ENCODE measurements at regions of chr17 and their contacts with region 1.

Region 1: DNA sequence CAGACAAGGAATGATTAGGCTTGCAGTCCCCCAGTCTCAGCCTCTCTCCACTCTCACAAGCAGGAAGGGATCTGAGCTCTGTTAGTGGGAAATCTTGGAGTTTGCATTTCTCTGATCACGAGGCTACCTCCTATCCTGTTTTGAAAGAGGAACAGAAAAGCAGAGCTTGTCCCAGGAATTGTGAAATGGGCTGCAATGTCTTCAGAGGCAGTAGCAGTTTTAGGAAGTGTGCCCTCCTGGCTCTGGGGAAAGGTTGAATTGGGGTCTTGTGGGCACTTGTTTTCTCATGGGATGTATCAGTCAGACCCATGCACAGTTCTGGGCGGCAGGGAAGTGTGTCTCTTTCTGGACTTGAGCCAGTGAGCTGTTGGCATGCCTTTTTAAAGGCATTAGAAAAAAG is 22.8 kb downstream of the NUP85 start:
- DNase-seq: no peak
- H3K4me3 ChIP-seq: no peak overlapping the region
- CTCF ChIP-seq: no peak

Region 2: DNA sequence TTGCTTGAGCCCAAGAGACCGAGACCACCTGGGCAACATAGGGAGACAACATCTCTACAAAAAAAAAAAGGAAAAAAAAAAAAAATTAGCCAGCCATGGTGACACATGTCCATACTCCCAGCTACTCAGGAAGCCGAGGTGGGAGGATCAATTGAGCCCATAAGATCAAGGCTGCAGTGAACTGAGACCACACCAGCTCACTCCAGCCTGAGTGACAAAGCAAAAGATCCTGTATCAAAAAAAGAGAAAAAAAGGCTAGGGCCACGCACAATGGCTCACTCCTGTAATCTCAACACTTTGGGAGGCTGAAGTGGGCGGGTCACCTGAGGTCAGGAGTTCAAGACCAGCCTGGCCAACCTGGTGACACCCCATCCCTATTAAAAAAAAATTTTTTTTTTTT is 59.3 kb before region 1 on chr17:
- CTCF ChIA-PET with region 1: no interaction called
- POLR2A ChIA-PET with region 1: no interaction called
- DNase-seq: no peak
- H3K4me3 ChIP-seq: no peak overlapping the region
- CTCF ChIP-seq: no peak

Region 3: DNA sequence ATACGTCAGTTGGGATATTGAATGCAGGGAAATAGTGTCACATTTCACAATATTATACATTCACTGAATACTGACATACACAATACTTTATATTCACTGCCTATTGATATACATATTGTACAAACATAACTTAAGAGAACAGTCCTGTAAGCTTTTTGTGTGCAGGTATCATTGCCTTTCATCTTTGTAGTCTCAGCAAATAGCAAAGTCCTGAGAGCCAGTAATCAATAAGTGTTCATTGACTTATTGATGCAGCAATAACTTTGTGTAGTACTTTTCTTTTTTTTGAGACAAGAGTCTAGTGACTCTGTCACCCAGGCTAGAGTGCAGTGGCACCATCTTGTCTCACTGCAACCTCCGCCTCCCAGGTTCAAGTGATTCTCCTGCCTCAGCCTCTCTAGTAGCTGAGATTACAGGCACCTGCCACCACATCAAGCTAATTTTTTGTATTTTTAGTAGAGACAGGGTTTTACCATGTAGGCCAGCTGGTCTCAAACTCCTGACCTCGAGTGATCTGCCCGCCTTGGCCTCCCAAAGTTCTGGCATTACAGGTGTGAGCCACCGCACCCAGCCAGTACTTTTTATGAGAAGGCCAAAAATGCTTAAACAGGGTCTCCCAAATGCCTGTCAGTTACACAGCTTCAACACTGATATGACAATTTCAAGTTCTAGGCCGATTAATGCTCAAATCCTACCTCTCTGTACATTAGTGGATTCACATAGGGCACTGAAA is 28.3 kb before region 1 on chr17:
- CTCF ChIA-PET with region 1: interaction called, 14 read pairs
- POLR2A ChIA-PET with region 1: interaction called, 3 read pairs
- DNase-seq: no peak
- H3K4me3 ChIP-seq: no peak overlapping the region
- CTCF ChIP-seq: no peak

Region 4: DNA sequence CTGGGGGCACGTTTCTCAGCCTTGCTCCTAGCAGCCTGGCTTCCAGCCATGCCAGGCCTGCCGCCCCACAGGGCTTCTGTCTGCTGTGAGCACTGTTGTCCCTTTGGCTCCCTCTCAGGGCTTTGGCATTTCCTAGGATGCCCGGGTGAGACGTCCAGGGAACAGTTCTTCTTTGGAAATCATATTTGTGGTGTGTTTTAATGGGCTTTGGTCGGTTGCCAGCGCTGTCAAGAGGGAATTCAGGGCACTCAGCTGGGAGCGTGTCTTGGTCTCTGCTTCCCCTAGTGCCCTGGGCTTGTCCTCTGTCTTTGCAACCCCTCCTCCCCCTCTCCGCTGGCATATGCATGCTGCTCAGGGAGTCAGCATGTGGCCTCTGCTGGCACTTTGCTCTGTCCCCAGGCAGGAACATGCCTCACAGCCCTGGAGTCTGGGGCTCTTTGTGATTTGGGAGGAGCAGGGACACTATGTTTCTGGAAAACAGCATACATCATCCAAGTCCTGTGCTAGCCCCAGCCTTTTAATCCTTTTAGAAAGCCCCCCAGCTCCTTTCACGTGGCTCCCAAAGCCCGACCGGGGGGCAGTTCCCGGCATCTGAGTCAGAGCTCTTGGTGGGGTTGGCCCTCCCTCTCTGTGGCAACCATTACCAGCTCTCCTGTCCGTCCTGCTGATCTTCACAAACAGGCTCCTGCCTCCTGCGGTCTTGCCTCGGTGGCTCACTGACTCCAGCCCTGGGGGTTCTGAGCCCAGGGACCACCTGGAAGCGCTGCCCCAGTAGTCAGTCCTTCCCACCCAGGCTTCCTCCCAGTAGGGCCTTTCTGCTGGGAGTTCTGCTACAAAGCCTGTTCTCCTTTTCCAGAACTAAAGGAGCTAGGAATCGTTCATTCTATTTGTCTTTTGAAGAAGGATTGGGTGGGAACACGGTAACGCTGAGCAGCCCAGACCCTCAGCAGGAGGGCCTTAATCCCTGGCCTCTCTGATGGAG is 465.5 kb after region 1 on chr17:
- CTCF ChIA-PET with region 1: no interaction called
- POLR2A ChIA-PET with region 1: no interaction called
- DNase-seq: peak; percentile 84
- H3K4me3 ChIP-seq: no peak overlapping the region; the same call in 1 of the 2 replicates
- CTCF ChIP-seq: peak; percentile 41